Thyroid gland (tissue), 4 donors: ENCODE measurements at regions of chr15 and their contacts with region 1.

Region 1: GRCh38 chr15:84600851-84601838 is at the start of gene ZSCAN2:
- DNase-seq: peak; percentile 96 to 97
- H3K4me3 ChIP-seq: peak within 1 kb of the TSS; percentile 57 to 94 (median 74)
- H3K27ac ChIP-seq: peak within 1 kb of the TSS in 2 of 3 donors; percentile 27 to 66
- H3K4me1 ChIP-seq: peaks cover 8% of the 10 kb centered on the region in 2 donors
- H3K27me3 ChIP-seq: no peaks in the 10 kb centered on the region
- CTCF ChIP-seq: peak in 1 of 6 experiments; percentile 1
- POLR2A ChIP-seq: peak in 1 of 2 donors; percentile 60
- total RNA-seq, gene ZSCAN2: 9.1 to 22.7 (median 11.7) TPM

Region 2: GRCh38 chr15:84643838-84644237 is 42.7 kb after region 1 on chr15:
- intact Hi-C with region 1: loop called (anchors 5 kb)
- DNase-seq: no peak
- H3K4me3 ChIP-seq: no peak overlapping the region
- H3K27ac ChIP-seq: no peak overlapping the region
- H3K4me1 ChIP-seq: peaks cover 3 to 7% of the 10 kb centered on the region in 2 donors
- H3K27me3 ChIP-seq: no peaks in the 10 kb centered on the region
- CTCF ChIP-seq: no peak
- POLR2A ChIP-seq: no peak

Region 3: GRCh38 chr15:84748274-84749110 is 147.3 kb after region 1 on chr15 and contains the start of gene ZNF592:
- intact Hi-C with region 1: loop called (anchors 10 kb)
- DNase-seq: peak; percentile 85 to 86
- H3K4me3 ChIP-seq: peak within 1 kb of the TSS; percentile 75 to 97 (median 96)
- H3K27ac ChIP-seq: peak within 1 kb of the TSS; percentile 98 to 100 (median 99)
- H3K4me1 ChIP-seq: peaks cover 25 to 46% of the 10 kb centered on the region in 2 donors
- H3K27me3 ChIP-seq: no peaks in the 10 kb centered on the region
- CTCF ChIP-seq: peak in 3 of 6 experiments; percentile 63 to 70 (median 68)
- POLR2A ChIP-seq: peak; percentile 39 to 74
- total RNA-seq, gene ZNF592: 18.3 to 28.0 (median 21.2) TPM